CD8-positive, alpha-beta T cell (primary cell): ENCODE measurements at regions of chr12 and their contacts with region 1.

Region 1: DNA sequence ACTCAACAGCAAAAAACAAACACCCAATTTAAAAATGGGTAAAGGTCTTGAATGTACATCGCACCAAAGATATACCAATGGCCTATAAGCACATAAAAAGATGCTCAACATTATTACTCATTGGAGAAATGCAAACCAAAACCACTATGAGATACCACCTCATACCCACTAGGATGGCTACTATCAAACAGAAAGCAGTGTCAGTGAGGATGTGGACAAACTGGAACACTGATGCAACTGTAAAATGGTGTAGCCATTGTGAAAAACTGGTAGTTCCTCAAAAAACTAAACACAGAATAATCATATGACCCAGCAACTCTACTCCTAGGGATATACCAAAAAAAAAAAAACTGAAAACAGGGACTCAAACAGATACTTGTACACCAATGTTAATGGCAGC is 49.3 kb downstream of the CDK17 start:
- DNase-seq: peak in 1 of 9 experiments; percentile 44
- ATAC-seq: no peak
- H3K4me3 ChIP-seq: no peak overlapping the region
- H3K4me3 Mint-ChIP-seq: no peak overlapping the region
- H3K27ac ChIP-seq: no peak overlapping the region
- H3K27ac Mint-ChIP-seq: peak overlapping the region; percentile 46
- H3K4me1 ChIP-seq: peaks cover 57% of the 10 kb centered on the region
- H3K4me1 Mint-ChIP-seq: peaks cover 80% of the 10 kb centered on the region
- H3K27me3 ChIP-seq: no peaks in the 10 kb centered on the region
- H3K27me3 Mint-ChIP-seq: no peaks in the 10 kb centered on the region
- CTCF ChIP-seq: no peak

Region 2: DNA sequence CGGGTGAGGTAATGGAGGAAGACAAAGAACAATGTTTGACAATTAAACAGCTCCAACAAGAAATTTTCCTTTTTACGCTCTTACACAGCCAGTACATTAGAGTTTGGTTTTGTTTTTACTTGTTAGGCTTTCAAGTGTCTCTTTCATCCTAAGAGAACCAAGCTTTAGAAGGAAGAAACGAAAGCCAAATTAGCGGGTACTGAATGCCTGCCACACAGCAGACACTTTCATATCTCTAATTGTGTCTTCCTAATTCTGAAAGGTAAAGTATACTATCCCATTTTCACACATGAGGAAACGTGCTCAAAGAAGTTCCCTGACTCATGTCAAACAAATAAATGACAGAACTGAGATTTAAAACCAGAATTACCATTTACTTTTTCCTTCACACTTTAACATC is 15.7 kb before region 1 on chr12:
- CTCF ChIA-PET with region 1: no interaction called
- POLR2A ChIA-PET with region 1: interaction called, 4 read pairs
- intact Hi-C with region 1: loop called in 1 of 2 experiments (anchors 2 kb)
- DNase-seq: peak in 1 of 9 experiments; percentile 32
- ATAC-seq: peak; percentile 44
- H3K4me3 ChIP-seq: no peak overlapping the region
- H3K4me3 Mint-ChIP-seq: peak overlapping the region; percentile 55
- H3K27ac ChIP-seq: no peak overlapping the region
- H3K27ac Mint-ChIP-seq: peak overlapping the region; percentile 16
- H3K4me1 ChIP-seq: peaks cover 19% of the 10 kb centered on the region
- H3K4me1 Mint-ChIP-seq: peaks cover 59% of the 10 kb centered on the region
- H3K27me3 ChIP-seq: no peaks in the 10 kb centered on the region
- H3K27me3 Mint-ChIP-seq: no peaks in the 10 kb centered on the region
- CTCF ChIP-seq: no peak

Region 3: GRCh38 chr12:96368233-96368632 is 17.3 kb after region 1 on chr12:
- CTCF ChIA-PET with region 1: no interaction called
- POLR2A ChIA-PET with region 1: interaction called, 3 read pairs
- intact Hi-C with region 1: loop called in 1 of 2 experiments (anchors 2 kb)
- DNase-seq: no peak
- ATAC-seq: no peak
- H3K4me3 ChIP-seq: no peak overlapping the region
- H3K4me3 Mint-ChIP-seq: peak overlapping the region; percentile 5
- H3K27ac ChIP-seq: no peak overlapping the region
- H3K27ac Mint-ChIP-seq: peak overlapping the region; percentile 13
- H3K4me1 ChIP-seq: peaks cover 53% of the 10 kb centered on the region
- H3K4me1 Mint-ChIP-seq: peaks cover 74% of the 10 kb centered on the region
- H3K27me3 ChIP-seq: no peaks in the 10 kb centered on the region
- H3K27me3 Mint-ChIP-seq: no peaks in the 10 kb centered on the region
- CTCF ChIP-seq: no peak